ENCODE measurements at regions of chr9 and their contacts with region 1.

Region 1: DNA sequence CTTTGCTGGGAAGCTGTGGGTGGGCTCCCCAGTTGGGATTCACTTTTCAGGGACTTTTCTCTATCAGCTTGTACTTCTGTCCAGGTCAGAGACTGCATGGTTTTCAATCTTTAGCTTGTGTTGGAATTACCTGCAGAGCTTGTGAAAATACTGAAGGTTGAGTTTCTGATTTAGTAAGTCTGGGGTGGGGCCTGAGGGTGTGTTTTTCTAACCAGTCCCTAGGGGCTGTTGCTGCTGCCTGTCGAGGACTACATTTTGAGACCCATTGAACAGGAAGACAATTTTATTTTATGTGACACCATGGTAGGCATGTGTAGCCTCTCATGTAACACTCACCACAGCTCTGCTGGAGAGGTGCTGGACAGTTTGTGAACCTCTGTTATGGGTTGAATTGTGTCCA is 14.7 kb upstream of the MLANA start:
- DNase-seq: no peak
- ATAC-seq: no peak
- H3K4me3 Mint-ChIP-seq: no peak overlapping the region
- H3K27ac Mint-ChIP-seq: no peak overlapping the region
- H3K4me1 Mint-ChIP-seq: peaks cover 9% of the 10 kb centered on the region
- H3K27me3 Mint-ChIP-seq: no peaks in the 10 kb centered on the region
- CTCF ChIP-seq: no peak

Region 2: GRCh38 chr9:5004481-5004880 is 871.5 kb before region 1 on chr9:
- CTCF ChIA-PET with region 1: no interaction called
- POLR2A ChIA-PET with region 1: interaction called, 10 read pairs
- intact Hi-C with region 1: no loop called
- DNase-seq: no peak
- ATAC-seq: no peak
- H3K4me3 Mint-ChIP-seq: no peak overlapping the region
- H3K27ac Mint-ChIP-seq: no peak overlapping the region
- H3K4me1 Mint-ChIP-seq: peaks cover 15% of the 10 kb centered on the region
- H3K27me3 Mint-ChIP-seq: no peaks in the 10 kb centered on the region
- CTCF ChIP-seq: no peak

Region 3: GRCh38 chr9:5939530-5939929 is 63.5 kb after region 1 on chr9:
- CTCF ChIA-PET with region 1: no interaction called
- POLR2A ChIA-PET with region 1: no interaction called
- intact Hi-C with region 1: no loop called
- DNase-seq: no peak
- ATAC-seq: no peak
- H3K4me3 Mint-ChIP-seq: no peak overlapping the region
- H3K27ac Mint-ChIP-seq: no peak overlapping the region
- H3K4me1 Mint-ChIP-seq: no peaks in the 10 kb centered on the region
- H3K27me3 Mint-ChIP-seq: no peaks in the 10 kb centered on the region
- CTCF ChIP-seq: no peak